ENCODE measurements at regions of chr2 and their contacts with region 1.

Region 1: GRCh38 chr2:199985625-199986207 is 30.3 kb downstream of the MAIP1 start:
- DNase-seq: peak; percentile 83
- ATAC-seq: peak; percentile 97
- H3K4me3 ChIP-seq: peak overlapping the region in 2 of 3 experiments; percentile 16 to 42; a peak in 2 of 6 replicates
- H3K27ac ChIP-seq: no peak overlapping the region
- H3K4me1 ChIP-seq: peaks cover 9% of the 10 kb centered on the region
- H3K27me3 ChIP-seq: no peaks in the 10 kb centered on the region
- CTCF ChIP-seq: peak; percentile 86
- EP300 ChIP-seq: no peak
- POLR2A ChIP-seq: no peak
- RAD21 ChIP-seq: peak; percentile 54; the same call in 1 of the 2 replicates

Region 2: GRCh38 chr2:200077210-200077650 is 91.5 kb after region 1 on chr2:
- CTCF ChIA-PET with region 1: no interaction called
- POLR2A ChIA-PET with region 1: no interaction called
- in situ Hi-C with region 1: no loop called
- intact Hi-C with region 1: loop called (anchors 5 kb)
- DNase-seq: peak; percentile 92
- ATAC-seq: peak; percentile 100
- H3K4me3 ChIP-seq: peak overlapping the region; percentile 30 to 54 (median 45); a peak in 4 of 6 replicates
- H3K27ac ChIP-seq: peak overlapping the region; percentile 68
- H3K4me1 ChIP-seq: peaks cover 24% of the 10 kb centered on the region
- H3K27me3 ChIP-seq: peaks cover 0 to 20% of the 10 kb centered on the region in 2 experiments; a peak in 3 of 5 replicates
- CTCF ChIP-seq: no peak
- EP300 ChIP-seq: peak in 1 of 2 experiments; percentile 89; a peak in 2 of 4 replicates
- POLR2A ChIP-seq: no peak
- RAD21 ChIP-seq: no peak

Region 3: DNA sequence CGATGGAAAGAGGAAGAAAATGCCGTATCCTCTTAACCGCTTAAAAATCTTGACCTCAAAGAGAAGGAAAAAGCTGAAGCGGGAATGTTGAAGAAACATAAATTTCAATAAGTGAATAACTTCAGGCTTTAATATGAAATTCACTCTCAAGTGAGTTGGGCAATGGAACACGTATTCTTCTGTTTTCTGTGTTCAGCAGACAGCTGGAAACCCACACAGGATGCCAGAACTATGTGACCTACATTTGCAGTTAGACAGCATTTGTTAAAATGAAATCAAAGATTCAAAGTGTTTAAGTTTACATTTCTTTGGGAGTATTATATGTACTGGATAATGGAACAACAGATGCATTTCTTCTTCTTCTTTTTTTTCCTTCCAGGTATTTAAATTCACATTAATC is 240.2 kb after region 1 on chr2:
- CTCF ChIA-PET with region 1: no interaction called
- POLR2A ChIA-PET with region 1: no interaction called
- in situ Hi-C with region 1: no loop called
- intact Hi-C with region 1: loop called (anchors 5 kb)
- DNase-seq: no peak
- ATAC-seq: no peak
- H3K4me3 ChIP-seq: no peak overlapping the region
- H3K27ac ChIP-seq: no peak overlapping the region
- H3K4me1 ChIP-seq: peaks cover 41% of the 10 kb centered on the region
- H3K27me3 ChIP-seq: no peaks in the 10 kb centered on the region
- CTCF ChIP-seq: no peak
- EP300 ChIP-seq: no peak
- POLR2A ChIP-seq: no peak
- RAD21 ChIP-seq: no peak

Region 4: GRCh38 chr2:200367199-200367598 is 381.5 kb after region 1 on chr2:
- CTCF ChIA-PET with region 1: no interaction called
- POLR2A ChIA-PET with region 1: no interaction called
- in situ Hi-C with region 1: no loop called
- intact Hi-C with region 1: loop called (anchors 10 kb)
- DNase-seq: peak; percentile 91
- ATAC-seq: peak; percentile 56
- H3K4me3 ChIP-seq: no peak overlapping the region
- H3K27ac ChIP-seq: peak overlapping the region; percentile 47
- H3K4me1 ChIP-seq: peaks cover 73% of the 10 kb centered on the region
- H3K27me3 ChIP-seq: no peaks in the 10 kb centered on the region
- CTCF ChIP-seq: no peak
- EP300 ChIP-seq: peak in 1 of 2 experiments; percentile 99; a peak in 2 of 4 replicates
- POLR2A ChIP-seq: no peak
- RAD21 ChIP-seq: no peak

Measured in HepG2 (cell line).